Activated T-helper 2 cell treated with anti-CD3 and anti-CD28 coated beads, Interferon-gamma antibody, Interleukin-2, Interleukin-4, amounts not matched to agents 10 μg/mL and 5 μg/mL and 100 μg/mL, durations not matched to agents 14 hours and 24 hours and 36 hours (primary cell): ENCODE measurements at regions of chr4 and their contacts with region 1.

Region 1: DNA sequence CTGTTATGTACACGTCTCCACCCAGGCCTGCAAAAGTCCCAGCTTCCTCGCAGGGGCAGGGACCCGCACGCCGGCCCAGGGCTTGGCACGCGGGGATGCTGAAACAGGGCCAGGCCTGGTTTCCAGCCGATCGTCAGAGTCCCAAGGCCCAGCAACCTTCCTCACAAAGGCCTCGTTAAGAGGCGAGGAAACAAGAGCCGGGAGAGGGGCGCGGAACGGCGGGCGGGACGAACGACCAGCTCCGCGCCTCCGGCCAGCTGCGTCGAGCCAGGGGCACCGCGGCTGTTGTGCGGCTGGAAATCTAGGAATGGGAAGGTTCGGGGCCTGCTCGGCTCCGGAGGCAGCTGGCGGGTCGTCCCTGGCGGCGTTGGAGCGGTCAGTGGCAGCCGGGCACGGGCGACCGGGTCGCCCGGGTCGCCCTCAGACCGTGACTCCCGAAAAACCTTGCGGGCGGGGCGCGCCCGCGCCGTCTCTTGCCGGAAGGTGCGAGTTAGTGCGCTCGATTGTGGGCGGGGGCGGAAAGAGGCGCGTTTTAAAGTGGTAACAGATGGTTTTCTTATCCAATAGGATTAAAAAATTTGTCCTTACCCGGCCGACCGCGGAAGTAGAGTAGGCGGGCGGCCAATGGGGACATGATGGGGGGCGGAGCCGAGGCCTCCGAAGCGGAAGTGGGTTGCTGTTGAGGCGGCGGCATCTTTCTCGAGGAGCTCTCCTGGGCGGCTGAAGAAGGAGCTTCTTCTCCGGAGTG is at the start of gene RNF4:
- DNase-seq: peak; percentile 96
- H3K4me3 Mint-ChIP-seq: peak within 1 kb of the TSS; percentile 92
- H3K27ac Mint-ChIP-seq: peak within 1 kb of the TSS; percentile 96
- H3K4me1 Mint-ChIP-seq: peaks cover 28% of the 10 kb centered on the region
- H3K27me3 Mint-ChIP-seq: peaks cover 4% of the 10 kb centered on the region
- total RNA-seq, gene RNF4: 99.0 and 99.1 TPM in 2 replicates

Region 2: GRCh38 chr4:1712216-1713002 is 756.2 kb before region 1 on chr4 and contains the start of gene SLBP:
- intact Hi-C with region 1: loop called (anchors 10 kb)
- DNase-seq: peak; percentile 99
- H3K4me3 Mint-ChIP-seq: peak within 1 kb of the TSS; percentile 99
- H3K27ac Mint-ChIP-seq: peak within 1 kb of the TSS; percentile 97
- H3K4me1 Mint-ChIP-seq: peaks cover 47% of the 10 kb centered on the region
- H3K27me3 Mint-ChIP-seq: no peaks in the 10 kb centered on the region
- total RNA-seq, gene SLBP: 125 and 127 TPM in 2 replicates

Region 3: DNA sequence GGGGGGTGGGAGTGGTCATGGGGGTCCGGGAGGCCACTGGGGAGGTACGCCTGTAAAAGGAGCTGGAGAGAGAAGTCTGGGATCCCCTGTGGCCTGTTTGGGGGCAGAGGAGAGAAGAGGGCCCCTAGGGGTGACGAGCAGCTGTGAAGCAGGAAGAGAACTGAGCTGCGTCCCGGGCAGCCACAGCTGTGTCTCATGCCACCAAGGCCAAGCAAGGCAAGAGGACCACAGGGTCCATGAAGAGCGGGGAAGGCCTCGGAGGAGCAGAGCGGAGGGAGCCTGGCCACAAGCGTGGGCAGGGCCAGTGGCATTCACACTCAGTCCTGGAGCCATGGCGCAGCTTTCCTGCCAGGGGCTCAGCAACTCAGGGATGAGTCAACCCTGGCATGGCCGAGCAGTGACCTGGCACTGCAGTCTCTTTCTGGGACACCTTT is 423.1 kb before region 1 on chr4:
- intact Hi-C with region 1: no loop called
- DNase-seq: no peak
- H3K4me3 Mint-ChIP-seq: no peak overlapping the region
- H3K27ac Mint-ChIP-seq: no peak overlapping the region
- H3K4me1 Mint-ChIP-seq: no peaks in the 10 kb centered on the region
- H3K27me3 Mint-ChIP-seq: peaks cover 11% of the 10 kb centered on the region

Region 4: DNA sequence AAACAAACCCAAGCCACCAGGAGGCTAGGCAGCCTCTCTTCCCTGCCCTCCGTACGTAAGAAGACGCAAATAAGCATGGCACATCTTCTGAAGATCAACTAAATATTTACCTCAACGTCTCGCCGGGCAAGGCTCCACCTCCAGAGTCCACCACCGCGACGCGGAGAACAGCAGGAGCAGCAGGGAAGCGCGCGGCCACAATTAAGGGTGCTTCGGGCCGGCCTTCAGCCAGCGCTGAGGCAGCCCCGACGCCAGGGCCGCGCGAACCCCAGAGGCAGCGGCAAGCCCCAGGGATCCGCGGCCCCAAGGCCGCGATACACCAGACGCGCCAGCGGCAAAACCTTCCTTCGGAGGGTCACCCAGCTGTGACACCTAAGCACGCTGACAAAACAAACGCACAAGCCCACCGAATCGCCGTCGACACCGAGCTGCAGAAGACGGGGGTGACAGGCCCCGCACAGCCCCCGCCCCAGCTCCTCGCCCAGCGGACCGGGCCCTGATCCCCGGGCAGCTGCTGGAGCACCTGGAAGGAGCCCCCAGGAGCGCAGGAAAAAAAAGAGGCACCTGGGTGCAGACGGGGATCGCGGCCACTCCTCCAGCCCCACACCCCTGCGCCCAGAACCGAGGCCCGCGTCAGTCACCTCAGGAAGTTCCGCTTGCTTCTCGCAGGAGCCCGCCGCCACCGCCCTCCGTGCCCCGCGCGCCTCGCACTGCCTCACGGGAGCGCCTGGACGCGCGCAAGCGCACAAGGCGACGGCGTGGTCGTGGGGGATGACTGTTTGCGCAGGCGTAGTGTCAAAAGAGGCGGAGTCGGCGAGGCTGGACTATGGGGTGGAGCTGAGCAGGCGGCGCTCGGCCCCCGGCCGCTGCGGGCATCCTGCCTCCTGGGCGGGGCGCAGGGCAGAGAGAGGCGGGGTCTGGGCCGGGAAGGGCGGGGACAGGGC is 226.9 kb before region 1 on chr4 and contains the starts of genes HAUS3 and POLN:
- intact Hi-C with region 1: loop called (anchors 1 kb)
- DNase-seq: peak; percentile 100
- H3K4me3 Mint-ChIP-seq: peak within 1 kb of the TSS; percentile 91
- H3K27ac Mint-ChIP-seq: peak within 1 kb of the TSS; percentile 80
- H3K4me1 Mint-ChIP-seq: peaks cover 49% of the 10 kb centered on the region
- H3K27me3 Mint-ChIP-seq: peaks cover 3% of the 10 kb centered on the region
- total RNA-seq, gene HAUS3: 17.1 and 18.6 TPM in 2 replicates
- total RNA-seq, gene POLN: 1.3 and 1.4 TPM in 2 replicates

Region 5: GRCh38 chr4:2418650-2419571 is 49.7 kb before region 1 on chr4 and contains the start of gene CFAP99:
- intact Hi-C with region 1: loop called (anchors 1 kb)
- DNase-seq: peak; percentile 94
- H3K4me3 Mint-ChIP-seq: peak within 1 kb of the TSS; percentile 88
- H3K27ac Mint-ChIP-seq: peak within 1 kb of the TSS; percentile 15
- H3K4me1 Mint-ChIP-seq: peaks cover 31% of the 10 kb centered on the region
- H3K27me3 Mint-ChIP-seq: peaks cover 48% of the 10 kb centered on the region
- total RNA-seq, gene CFAP99: not detected in 2 replicates

Region 6: DNA sequence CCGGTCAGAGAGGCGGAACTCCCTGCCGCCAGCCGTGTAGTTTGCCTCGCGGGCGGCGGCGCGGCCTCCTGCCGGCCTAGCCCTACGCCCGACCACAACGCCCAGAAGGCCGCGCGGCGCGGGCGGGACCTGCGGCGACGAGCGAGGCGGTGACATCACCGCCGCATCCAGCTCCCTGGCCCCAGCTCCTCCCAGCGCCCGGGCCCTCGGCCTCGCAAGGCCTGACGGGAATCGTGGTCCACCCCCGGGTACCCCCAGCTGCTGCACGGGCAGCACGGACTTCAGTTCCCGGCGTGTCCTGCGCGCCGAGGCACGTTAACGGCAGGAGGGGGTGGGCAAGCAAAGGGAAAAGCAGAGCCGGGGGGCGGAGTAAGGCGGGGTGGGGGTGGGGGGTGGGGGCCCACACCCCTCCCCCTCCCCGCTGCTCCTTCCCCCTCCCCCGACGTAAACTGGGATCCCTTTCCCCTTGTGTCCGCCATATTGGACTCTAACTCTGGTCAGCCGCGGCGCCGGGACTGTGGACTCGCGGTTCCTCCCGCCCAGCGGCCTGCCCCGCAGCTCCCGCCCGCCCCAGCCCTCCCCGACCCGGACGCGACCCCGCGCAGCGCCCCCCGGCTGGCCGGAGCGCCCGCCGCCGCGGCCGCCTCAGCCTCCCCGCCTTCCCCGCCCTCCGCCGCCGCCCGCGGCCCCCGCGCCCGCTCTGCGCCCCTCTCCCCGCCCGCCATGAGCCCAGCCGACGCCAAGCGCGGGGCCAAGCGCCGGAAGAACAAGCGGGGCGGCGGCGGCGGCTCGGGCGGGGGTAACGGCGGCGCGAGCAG is 67.8 kb after region 1 on chr4 and contains the start of gene FAM193A:
- intact Hi-C with region 1: loop called (anchors 1 kb)
- DNase-seq: peak; percentile 99
- H3K4me3 Mint-ChIP-seq: peak within 1 kb of the TSS; percentile 90
- H3K27ac Mint-ChIP-seq: peak within 1 kb of the TSS; percentile 93
- H3K4me1 Mint-ChIP-seq: peaks cover 10% of the 10 kb centered on the region
- H3K27me3 Mint-ChIP-seq: no peaks in the 10 kb centered on the region
- total RNA-seq, gene FAM193A: 30.8 and 31.2 TPM in 2 replicates

Region 7: DNA sequence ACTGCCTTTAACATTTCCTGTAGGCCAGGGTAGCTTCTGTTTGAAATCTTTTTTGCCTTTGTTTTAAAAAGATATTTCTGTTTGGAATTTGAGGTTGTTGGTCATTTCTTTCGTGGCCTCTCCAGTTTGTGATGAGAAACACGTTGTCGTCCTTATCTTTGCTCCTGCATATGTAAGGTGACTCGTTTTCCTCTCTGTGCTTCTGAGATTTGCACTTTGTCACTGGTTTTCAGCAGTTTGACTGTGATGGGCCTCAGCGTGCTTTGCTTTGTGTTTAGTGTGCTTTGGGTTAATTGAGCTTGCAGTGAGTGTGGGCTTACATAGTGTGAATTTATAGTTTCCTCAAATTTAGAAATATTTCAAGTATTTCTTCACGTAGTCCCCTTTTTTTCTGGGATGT is 149.3 kb after region 1 on chr4:
- intact Hi-C with region 1: no loop called
- DNase-seq: no peak
- H3K4me3 Mint-ChIP-seq: no peak overlapping the region
- H3K27ac Mint-ChIP-seq: no peak overlapping the region
- H3K4me1 Mint-ChIP-seq: peaks cover 6% of the 10 kb centered on the region
- H3K27me3 Mint-ChIP-seq: no peaks in the 10 kb centered on the region

Region 8: DNA sequence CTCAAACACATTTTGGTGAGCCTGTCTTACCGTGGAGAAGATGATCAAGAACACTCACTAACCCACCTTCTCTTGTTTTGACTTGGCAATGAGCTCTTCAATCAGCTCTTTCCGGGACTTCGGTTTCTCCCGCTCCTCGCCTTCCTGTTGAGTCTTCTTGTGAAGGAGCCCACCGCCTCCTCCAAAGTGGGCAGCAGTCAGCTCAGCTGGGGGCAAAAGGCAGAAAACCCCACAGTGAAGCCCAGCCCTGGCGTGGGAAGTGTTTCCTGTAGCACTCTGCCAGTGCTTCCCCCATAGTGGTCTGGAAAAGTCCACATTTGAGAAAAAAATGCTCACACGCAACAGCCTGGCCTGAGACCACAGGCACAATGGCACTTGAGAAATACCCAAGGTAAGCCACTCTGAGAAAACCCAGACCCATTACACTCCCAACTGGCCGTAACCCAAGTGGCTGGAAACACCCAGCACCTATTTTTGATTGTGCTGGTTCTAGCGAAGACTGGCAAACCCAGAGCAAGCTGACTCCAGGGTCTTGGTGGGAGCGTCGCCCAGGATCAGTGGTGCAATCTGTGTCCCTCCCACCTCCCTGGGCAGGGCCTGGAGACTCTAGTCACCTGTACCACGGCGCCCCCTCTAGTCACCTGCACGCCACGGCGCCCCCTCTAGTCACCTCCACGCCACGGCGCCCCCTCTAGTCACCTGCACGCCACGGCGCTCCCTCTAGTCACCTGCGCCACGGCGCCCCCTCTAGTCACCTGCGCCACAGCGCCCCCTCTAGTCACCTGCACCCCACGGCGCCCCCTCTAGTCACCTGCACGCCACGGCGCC is 486.0 kb after region 1 on chr4:
- intact Hi-C with region 1: loop called (anchors 2 kb)
- DNase-seq: peak; percentile 57
- H3K4me3 Mint-ChIP-seq: peak overlapping the region; percentile 74
- H3K27ac Mint-ChIP-seq: peak overlapping the region; percentile 92
- H3K4me1 Mint-ChIP-seq: peaks cover 63% of the 10 kb centered on the region
- H3K27me3 Mint-ChIP-seq: no peaks in the 10 kb centered on the region